Aorta (tissue), 5 donors: ENCODE measurements at regions of chr12 and their contacts with region 1.

Region 1: DNA sequence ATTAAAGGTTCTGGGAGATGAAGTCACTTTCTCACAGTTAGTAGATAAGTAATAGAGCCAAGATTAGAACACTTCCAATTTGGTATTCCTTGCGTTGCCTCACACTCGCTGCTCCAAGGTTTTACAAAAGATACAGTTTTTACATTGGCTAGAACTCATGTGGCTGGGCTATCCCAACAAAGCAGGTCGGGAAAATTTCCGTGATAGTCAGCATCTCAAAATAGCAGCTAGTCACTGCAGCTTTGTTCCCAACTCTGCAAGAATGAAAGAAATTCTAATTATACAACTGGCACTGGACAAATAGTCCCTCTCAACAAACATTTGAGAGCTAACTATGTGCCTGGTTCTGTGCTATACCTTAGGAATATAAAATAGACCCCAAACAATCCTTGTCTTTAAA is 24.6 kb upstream of the PPP1R12A start:
- DNase-seq: no peak
- ATAC-seq: peak; percentile 77
- H3K4me3 ChIP-seq: no peak overlapping the region
- H3K27ac ChIP-seq: no peak overlapping the region
- H3K4me1 ChIP-seq: peaks cover 2 to 3% of the 10 kb centered on the region in 2 donors
- H3K27me3 ChIP-seq: peaks cover 0 to 2% of the 10 kb centered on the region in 2 donors

Region 2: DNA sequence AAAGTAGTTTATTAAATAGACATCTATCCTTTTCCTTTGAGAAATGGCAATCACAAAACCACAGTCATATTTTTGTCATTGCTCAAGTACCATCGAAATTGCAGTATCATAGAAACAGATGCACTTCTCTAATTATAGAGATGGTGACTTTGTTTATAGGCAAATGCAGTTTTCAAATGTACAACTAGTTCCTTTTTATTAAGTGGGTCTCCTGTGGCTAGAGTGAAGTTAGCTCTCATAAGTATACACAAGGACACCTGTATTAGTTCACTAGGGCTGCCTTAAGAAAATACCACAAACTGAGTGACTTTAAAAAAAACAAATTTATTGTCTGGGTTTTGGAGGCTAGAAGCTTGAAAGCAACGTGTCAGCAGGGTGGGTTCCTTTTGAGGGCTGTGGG is 202.7 kb after region 1 on chr12:
- intact Hi-C with region 1: loop called in 1 of 2 experiments (anchors 10 kb)
- DNase-seq: no peak
- ATAC-seq: no peak
- H3K4me3 ChIP-seq: no peak overlapping the region
- H3K27ac ChIP-seq: no peak overlapping the region
- H3K4me1 ChIP-seq: no peaks in the 10 kb centered on the region
- H3K27me3 ChIP-seq: no peaks in the 10 kb centered on the region